Sciatic nerve (tissue), 2 donors: ENCODE measurements at regions of chr6 and their contacts with region 1.

Region 1: DNA sequence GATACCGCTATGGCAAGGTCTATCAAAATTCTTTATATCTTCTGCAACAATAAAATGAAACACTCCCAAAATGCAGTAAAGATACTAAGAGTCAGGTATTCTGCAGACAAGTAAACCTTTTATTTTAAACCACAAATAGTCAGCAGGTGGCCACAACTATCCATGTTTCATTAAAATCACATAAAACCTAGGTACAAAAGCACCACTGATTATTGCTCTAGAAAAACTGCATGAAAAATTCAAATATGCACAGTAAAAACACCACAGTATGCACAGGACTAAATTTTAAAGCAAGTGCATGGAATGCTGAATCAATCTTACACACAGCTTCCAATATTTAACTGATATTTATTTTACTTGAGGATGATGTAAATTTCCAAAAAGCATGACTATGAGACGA is 33.3 kb downstream of the HMGN3 start:
- DNase-seq: no peak
- ATAC-seq: no peak

Region 2: GRCh38 chr6:78397499-78397898 is 803.6 kb before region 1 on chr6:
- intact Hi-C with region 1: no loop called
- DNase-seq: no peak
- ATAC-seq: no peak

Region 3: GRCh38 chr6:79094938-79095337 is 106.2 kb before region 1 on chr6:
- intact Hi-C with region 1: no loop called
- DNase-seq: no peak
- ATAC-seq: no peak

Region 4: GRCh38 chr6:79117752-79118151 is 83.4 kb before region 1 on chr6:
- intact Hi-C with region 1: loop called (anchors 1 kb)
- DNase-seq: no peak
- ATAC-seq: no peak